ENCODE measurements at regions of chr10 and their contacts with region 1.

Region 1: DNA sequence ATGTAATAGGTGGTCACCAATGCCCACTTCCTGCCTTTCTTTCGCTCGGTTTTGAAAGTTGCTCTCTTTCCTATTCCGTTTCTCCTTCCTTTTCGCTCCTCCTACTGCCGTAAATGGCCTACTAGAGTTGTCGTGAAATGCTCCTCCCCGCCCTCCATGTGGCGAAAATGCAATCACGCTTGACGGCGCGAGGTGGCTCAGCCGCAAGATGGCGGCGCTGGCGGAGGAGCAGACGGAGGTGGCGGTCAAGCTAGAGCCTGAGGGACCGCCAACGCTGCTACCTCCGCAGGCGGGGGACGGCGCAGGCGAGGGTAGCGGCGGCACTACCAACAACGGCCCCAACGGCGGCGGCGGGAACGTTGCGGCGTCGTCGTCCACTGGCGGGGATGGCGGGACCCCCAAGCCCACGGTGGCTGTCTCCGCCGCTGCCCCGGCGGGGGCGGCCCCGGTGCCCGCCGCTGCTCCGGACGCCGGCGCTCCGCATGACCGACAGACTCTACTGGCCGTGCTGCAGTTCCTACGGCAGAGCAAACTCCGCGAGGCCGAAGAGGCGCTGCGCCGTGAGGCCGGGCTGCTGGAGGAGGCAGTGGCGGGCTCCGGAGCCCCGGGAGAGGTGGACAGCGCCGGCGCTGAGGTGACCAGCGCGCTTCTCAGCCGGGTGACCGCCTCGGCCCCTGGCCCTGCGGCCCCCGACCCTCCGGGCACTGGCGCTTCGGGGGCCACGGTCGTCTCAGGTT is at the start of gene TAF5:
- DNase-seq: peak; percentile 92

Region 2: GRCh38 chr10:103265717-103266329 is 102.1 kb before region 1 on chr10:
- CTCF ChIA-PET with region 1: no interaction called
- POLR2A ChIA-PET with region 1: no interaction called
- DNase-seq: peak; percentile 63

Region 3: DNA sequence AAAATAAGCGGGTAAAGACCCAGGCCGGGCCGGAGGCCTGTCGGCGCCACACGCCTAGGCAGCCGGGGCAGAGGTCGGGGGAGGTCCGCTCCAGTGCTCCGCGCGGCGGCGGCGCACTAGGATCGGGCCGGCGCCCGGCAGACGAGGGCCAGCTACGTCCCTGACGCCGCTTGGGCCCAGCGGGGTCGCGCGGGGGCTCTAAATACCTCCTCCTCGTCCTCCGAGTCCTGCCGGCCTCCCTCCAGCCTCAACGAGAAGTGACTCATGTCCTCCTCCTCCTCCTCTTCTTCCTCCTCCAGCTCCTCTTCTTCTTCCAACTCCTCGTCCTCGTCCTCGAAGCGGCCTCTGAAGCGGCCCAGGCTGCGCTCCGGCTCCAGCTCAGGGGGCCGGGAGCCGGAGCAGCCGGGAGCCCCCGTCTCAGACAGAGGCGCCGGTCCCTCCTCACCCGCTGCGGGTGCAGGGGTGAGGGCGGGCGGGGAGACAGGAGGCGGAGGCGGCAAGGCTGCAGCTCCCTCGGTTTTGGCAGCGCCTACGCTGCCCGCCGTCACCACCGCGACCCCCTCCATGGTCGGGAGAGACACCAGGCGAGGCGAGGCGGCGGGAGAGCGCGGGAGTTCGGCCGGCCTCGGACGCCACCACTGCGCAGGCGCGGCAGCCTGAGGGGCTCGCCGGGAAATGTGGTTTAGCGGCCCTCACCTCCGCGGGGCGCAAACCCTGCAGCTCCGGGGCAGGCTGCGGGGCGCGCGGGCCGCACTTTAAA is 17.3 kb before region 1 on chr10 and contains the start of gene PCGF6:
- CTCF ChIA-PET with region 1: interaction called, 4 read pairs
- POLR2A ChIA-PET with region 1: interaction called, 31 read pairs
- DNase-seq: peak; percentile 98

Measured in HEK293T (cell line).